PC-9 (cell line): ENCODE measurements at regions of chr11 and their contacts with region 1.

Region 1: GRCh38 chr11:73995247-73995646 is 12.6 kb upstream of the UCP2 start:
- DNase-seq: no peak
- H3K4me3 ChIP-seq: no peak overlapping the region
- H3K27ac ChIP-seq: no peak overlapping the region
- H3K4me1 ChIP-seq: 0 out of 2 replicates have a peak, but pooled peaks cover 6% of the 10 kb centered on the region
- H3K27me3 ChIP-seq: no peaks in the 10 kb centered on the region
- CTCF ChIP-seq: no peak

Region 2: GRCh38 chr11:73551677-73552076 is 443.6 kb before region 1 on chr11:
- CTCF ChIA-PET with region 1: interaction called, 12 read pairs
- POLR2A ChIA-PET with region 1: no interaction called
- intact Hi-C with region 1: no loop called
- DNase-seq: no peak
- H3K4me3 ChIP-seq: no peak overlapping the region
- H3K27ac ChIP-seq: no peak overlapping the region
- H3K4me1 ChIP-seq: no peaks in the 10 kb centered on the region
- H3K27me3 ChIP-seq: no peaks in the 10 kb centered on the region
- CTCF ChIP-seq: no peak